ENCODE measurements at regions of chr11 and their contacts with region 1.

Region 1: DNA sequence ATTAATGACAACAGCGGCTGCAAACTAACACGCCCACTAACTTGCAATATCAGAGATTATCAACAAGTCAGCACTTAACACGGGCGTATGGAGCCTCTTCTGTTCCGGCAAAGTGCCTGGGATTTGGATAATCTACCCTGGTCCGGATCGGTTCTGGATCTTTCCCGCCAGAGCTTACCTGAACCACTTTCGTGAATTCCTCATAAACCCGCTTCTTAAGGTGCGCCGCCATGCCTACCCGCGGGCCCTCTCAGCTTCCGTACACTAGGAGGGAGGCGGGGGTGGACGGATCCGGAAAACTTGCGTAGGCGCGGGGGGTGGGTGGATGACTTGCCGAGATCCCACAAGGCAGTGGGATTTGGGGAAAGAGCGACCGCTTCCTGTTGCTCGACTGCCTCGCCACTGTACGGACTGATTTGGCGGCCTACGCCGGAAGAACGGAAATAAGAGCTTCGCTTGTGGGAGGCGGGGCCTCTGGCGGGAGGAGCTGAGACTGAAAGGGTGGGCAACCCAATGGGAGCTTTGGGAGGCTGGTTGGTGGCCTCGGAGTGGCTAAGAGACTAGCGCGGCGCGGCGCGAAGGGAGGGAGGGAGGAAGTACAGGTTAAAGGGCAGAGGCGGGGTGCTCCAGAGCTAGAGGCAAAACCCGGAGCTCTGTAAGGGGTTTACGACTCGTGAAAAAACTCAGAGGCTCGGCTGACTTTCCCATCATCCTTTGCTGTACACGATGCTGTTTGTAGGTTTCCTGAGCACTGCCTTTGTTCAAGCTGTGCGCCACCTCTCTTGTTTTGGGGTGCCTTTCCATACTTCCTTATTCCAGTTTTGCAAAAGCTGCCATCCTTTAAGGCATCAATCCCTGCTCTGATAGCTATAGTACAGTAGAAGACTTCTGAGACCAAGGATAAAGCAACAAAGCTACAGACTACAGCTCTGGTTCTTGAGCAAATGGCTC is at the start of gene INTS4:
- DNase-seq: peak; percentile 100
- H3K4me3 ChIP-seq: peak within 1 kb of the TSS; percentile 74
- H3K4me3 Mint-ChIP-seq: peak within 1 kb of the TSS; percentile 98
- H3K27ac Mint-ChIP-seq: peak within 1 kb of the TSS; percentile 82
- H3K4me1 ChIP-seq: peaks cover 12% of the 10 kb centered on the region
- H3K4me1 Mint-ChIP-seq: peaks cover 12% of the 10 kb centered on the region
- H3K27me3 ChIP-seq: no peaks in the 10 kb centered on the region
- H3K27me3 Mint-ChIP-seq: no peaks in the 10 kb centered on the region
- CTCF ChIP-seq: peak in 1 of 2 experiments; percentile 5
- total RNA-seq, gene INTS4: 86.7 and 88.7 TPM in 2 replicates

Region 2: GRCh38 chr11:77637345-77638165 is 357.1 kb before region 1 on chr11 and contains the start of gene CLNS1A:
- CTCF ChIA-PET with region 1: no interaction called
- POLR2A ChIA-PET with region 1: interaction called, 6 read pairs
- intact Hi-C with region 1: loop called (anchors 2 kb)
- DNase-seq: peak; percentile 95 to 96
- H3K4me3 ChIP-seq: peak within 1 kb of the TSS; percentile 80
- H3K4me3 Mint-ChIP-seq: peak within 1 kb of the TSS; percentile 88
- H3K27ac Mint-ChIP-seq: peak within 1 kb of the TSS; percentile 85
- H3K4me1 ChIP-seq: peaks cover 4% of the 10 kb centered on the region
- H3K4me1 Mint-ChIP-seq: peaks cover 15% of the 10 kb centered on the region
- H3K27me3 ChIP-seq: no peaks in the 10 kb centered on the region
- H3K27me3 Mint-ChIP-seq: no peaks in the 10 kb centered on the region
- CTCF ChIP-seq: peak in 1 of 2 experiments; percentile 8
- total RNA-seq, gene CLNS1A: 282 and 306 TPM in 2 replicates

Region 3: DNA sequence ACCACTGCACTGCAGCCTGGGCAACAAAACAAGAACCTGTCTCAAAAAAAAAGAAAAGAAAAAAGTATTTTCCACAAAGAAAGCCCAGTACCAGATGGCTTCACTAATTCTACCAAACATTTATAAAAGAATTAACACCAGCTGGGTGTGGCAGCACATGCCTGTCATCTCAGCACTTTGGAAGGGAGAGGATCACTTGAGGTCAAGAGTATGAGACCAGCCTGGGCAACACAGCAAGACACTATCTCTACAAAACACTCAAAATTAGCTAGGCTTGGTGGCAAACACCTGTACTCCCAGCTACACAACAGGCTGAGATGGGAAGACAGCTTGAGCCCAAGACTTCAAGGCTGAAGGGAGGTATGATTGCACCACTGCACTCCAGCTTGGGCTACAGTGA is 194.2 kb before region 1 on chr11:
- CTCF ChIA-PET with region 1: interaction called, 4 read pairs
- POLR2A ChIA-PET with region 1: interaction called, 18 read pairs
- intact Hi-C with region 1: no loop called
- DNase-seq: no peak
- H3K4me3 ChIP-seq: no peak overlapping the region
- H3K4me3 Mint-ChIP-seq: peak overlapping the region; percentile 64
- H3K27ac Mint-ChIP-seq: peak overlapping the region; percentile 94
- H3K4me1 ChIP-seq: peaks cover 39% of the 10 kb centered on the region
- H3K4me1 Mint-ChIP-seq: peaks cover 34% of the 10 kb centered on the region
- H3K27me3 ChIP-seq: no peaks in the 10 kb centered on the region
- H3K27me3 Mint-ChIP-seq: no peaks in the 10 kb centered on the region
- CTCF ChIP-seq: no peak

Region 4: DNA sequence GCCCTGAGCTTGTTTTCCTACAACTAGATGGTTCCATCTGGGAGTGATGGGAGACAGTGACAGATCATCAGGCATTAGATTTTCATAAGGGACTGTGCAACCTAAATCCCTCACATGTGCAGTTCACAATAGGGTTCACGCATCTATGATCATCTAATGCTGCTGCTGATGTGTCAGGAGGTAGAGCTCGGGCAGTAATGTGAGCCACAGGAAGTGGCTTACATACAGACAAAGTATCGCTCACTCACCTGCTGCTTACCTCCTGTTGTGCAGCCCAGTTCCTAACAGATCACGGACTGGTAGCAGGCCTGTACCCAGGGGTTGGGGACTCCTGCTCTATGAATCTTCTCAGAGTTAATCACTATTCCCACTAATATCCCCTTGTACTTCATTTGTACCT is 161.4 kb before region 1 on chr11:
- CTCF ChIA-PET with region 1: no interaction called
- POLR2A ChIA-PET with region 1: no interaction called
- intact Hi-C with region 1: no loop called
- DNase-seq: no peak
- H3K4me3 ChIP-seq: no peak overlapping the region
- H3K4me3 Mint-ChIP-seq: no peak overlapping the region
- H3K27ac Mint-ChIP-seq: no peak overlapping the region
- H3K4me1 ChIP-seq: no peaks in the 10 kb centered on the region
- H3K4me1 Mint-ChIP-seq: no peaks in the 10 kb centered on the region
- H3K27me3 ChIP-seq: no peaks in the 10 kb centered on the region
- H3K27me3 Mint-ChIP-seq: no peaks in the 10 kb centered on the region
- CTCF ChIP-seq: no peak

Region 5: GRCh38 chr11:77959434-77959833 is 35.3 kb before region 1 on chr11:
- CTCF ChIA-PET with region 1: interaction called, 3 read pairs
- POLR2A ChIA-PET with region 1: interaction called, 6 read pairs
- intact Hi-C with region 1: loop called (anchors 2 kb)
- DNase-seq: no peak
- H3K4me3 ChIP-seq: no peak overlapping the region
- H3K4me3 Mint-ChIP-seq: peak overlapping the region; percentile 25
- H3K27ac Mint-ChIP-seq: peak overlapping the region; percentile 58
- H3K4me1 ChIP-seq: peaks cover 24% of the 10 kb centered on the region
- H3K4me1 Mint-ChIP-seq: peaks cover 24% of the 10 kb centered on the region
- H3K27me3 ChIP-seq: no peaks in the 10 kb centered on the region
- H3K27me3 Mint-ChIP-seq: no peaks in the 10 kb centered on the region
- CTCF ChIP-seq: no peak

Region 6: DNA sequence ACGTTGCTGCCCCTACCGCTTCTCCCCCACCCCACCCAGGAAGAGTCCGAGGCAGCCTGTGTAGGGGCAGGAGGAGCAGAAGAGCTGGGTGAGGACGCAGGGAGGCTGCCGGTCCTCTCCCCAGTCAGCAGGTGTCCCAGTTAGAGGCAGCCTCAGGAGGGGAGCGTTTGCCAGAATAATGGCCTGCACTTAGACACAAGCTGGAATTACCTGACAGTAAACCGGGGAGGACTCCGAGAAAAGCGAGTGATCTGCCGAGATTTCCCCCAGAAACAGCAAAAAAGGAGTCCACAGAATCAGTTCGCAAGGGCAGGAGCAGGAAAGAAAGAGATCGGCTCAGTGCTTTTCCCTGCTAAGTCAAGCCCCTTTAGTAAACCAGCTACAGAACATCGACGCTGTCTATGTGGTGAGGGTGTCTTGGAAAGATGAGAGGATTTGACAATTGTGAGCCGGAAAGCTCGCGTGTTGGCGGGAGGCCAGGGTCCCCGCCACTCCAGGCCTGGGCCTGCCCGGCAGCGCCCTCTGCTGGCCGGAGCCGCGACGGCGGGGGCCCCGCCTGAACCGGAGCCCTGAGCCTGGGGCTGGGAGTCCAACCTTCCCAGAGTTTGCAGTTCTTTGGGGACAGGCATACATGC is 51.3 kb after region 1 on chr11:
- CTCF ChIA-PET with region 1: interaction called, 23 read pairs
- POLR2A ChIA-PET with region 1: interaction called, 11 read pairs
- intact Hi-C with region 1: loop called (anchors 2 kb)
- DNase-seq: peak; percentile 80 to 97
- H3K4me3 ChIP-seq: peak overlapping the region; percentile 28
- H3K4me3 Mint-ChIP-seq: peak overlapping the region; percentile 75
- H3K27ac Mint-ChIP-seq: peak overlapping the region; percentile 1
- H3K4me1 ChIP-seq: peaks cover 15% of the 10 kb centered on the region
- H3K4me1 Mint-ChIP-seq: peaks cover 23% of the 10 kb centered on the region
- H3K27me3 ChIP-seq: no peaks in the 10 kb centered on the region
- H3K27me3 Mint-ChIP-seq: no peaks in the 10 kb centered on the region
- CTCF ChIP-seq: peak; percentile 99

Region 7: GRCh38 chr11:78094250-78094649 is 99.6 kb after region 1 on chr11:
- CTCF ChIA-PET with region 1: interaction called, 3 read pairs
- POLR2A ChIA-PET with region 1: interaction called, 18 read pairs
- intact Hi-C with region 1: no loop called
- DNase-seq: no peak
- H3K4me3 ChIP-seq: no peak overlapping the region
- H3K4me3 Mint-ChIP-seq: no peak overlapping the region
- H3K27ac Mint-ChIP-seq: no peak overlapping the region
- H3K4me1 ChIP-seq: peaks cover 21% of the 10 kb centered on the region
- H3K4me1 Mint-ChIP-seq: peaks cover 32% of the 10 kb centered on the region
- H3K27me3 ChIP-seq: no peaks in the 10 kb centered on the region
- H3K27me3 Mint-ChIP-seq: no peaks in the 10 kb centered on the region
- CTCF ChIP-seq: no peak

Measured in Caco-2 (cell line).